ENCODE measurements at regions of chr1 and their contacts with region 1.

Region 1: GRCh38 chr1:17661546-17662157 is 93.5 kb upstream of the ACTL8 start:
- DNase-seq: peak; percentile 70
- H3K4me3 Mint-ChIP-seq: no peak overlapping the region
- H3K27ac Mint-ChIP-seq: no peak overlapping the region
- H3K4me1 Mint-ChIP-seq: no peaks in the 10 kb centered on the region
- H3K27me3 Mint-ChIP-seq: no peaks in the 10 kb centered on the region

Region 2: DNA sequence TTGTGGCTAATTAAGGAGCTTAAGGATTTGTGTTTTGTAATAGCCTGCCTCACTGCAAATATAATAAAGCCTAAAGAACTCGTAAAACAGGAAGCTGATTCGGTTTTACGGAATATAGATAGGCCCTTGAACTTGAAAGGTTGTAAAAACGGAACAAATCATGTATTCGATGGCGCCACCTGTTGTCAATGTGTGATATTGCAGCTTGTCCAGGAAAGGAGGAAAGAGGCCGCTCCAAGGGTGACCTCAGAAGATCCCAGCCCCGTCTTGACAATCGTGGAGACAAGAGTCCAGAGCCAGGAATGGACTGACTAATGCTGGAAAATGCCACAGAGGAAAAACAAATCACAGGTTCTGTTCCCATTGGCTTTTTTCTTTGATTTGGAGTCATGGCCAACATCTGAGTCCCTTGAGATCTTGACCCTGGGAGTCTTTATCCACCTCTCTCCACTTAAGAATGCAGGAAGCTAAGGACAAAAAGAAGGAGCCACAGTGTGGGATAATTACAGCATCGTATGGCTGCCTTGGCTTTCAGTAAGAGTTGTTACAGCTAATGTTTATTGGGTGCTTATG is 438.9 kb after region 1 on chr1:
- CTCF ChIA-PET with region 1: interaction called, 18 read pairs
- DNase-seq: peak; percentile 58
- H3K4me3 Mint-ChIP-seq: no peak overlapping the region
- H3K27ac Mint-ChIP-seq: no peak overlapping the region
- H3K4me1 Mint-ChIP-seq: no peaks in the 10 kb centered on the region
- H3K27me3 Mint-ChIP-seq: peaks cover 6% of the 10 kb centered on the region

Measured in activated naive CD4-positive, alpha-beta T cell treated with anti-CD3 and anti-CD28 coated beads, Interleukin-2, amount 10 ng/mL, durations not matched to agents 7 days and 5 days (primary cell).